ENCODE measurements at regions of chr15 and their contacts with region 1.

Region 1: GRCh38 chr15:89184357-89184756 is 37.0 kb downstream of the RLBP1 start:
- DNase-seq: no peak
- H3K4me3 ChIP-seq: no peak overlapping the region
- H3K27ac ChIP-seq: no peak overlapping the region
- H3K27me3 ChIP-seq: no peaks in the 10 kb centered on the region
- CTCF ChIP-seq: no peak

Region 2: DNA sequence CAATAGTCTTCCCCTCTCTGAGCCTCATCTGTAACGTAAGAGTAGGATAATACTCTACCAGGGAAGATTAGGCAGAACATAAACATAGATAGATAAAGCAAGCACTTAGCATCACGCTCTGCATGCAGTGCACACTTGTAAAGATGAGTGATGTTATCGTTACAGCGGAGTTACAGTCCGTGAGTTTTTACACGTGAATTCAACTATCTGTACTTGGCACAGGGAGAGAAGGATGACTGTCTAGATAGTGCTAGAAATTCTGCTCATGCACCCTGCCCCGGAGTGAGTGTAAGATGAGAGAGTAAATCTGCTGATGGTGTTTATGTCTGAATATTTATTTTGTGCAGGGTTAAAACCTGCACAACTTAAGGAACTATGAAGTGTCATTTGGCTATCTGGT is 324.8 kb before region 1 on chr15:
- CTCF ChIA-PET with region 1: no interaction called
- POLR2A ChIA-PET with region 1: no interaction called
- DNase-seq: no peak
- H3K4me3 ChIP-seq: no peak overlapping the region
- H3K27ac ChIP-seq: no peak overlapping the region
- H3K27me3 ChIP-seq: peaks cover 28% of the 10 kb centered on the region
- CTCF ChIP-seq: no peak

Region 3: GRCh38 chr15:89197503-89197971 is 13.2 kb after region 1 on chr15:
- CTCF ChIA-PET with region 1: interaction called, 12 read pairs
- POLR2A ChIA-PET with region 1: interaction called, 3 read pairs
- DNase-seq: no peak
- H3K4me3 ChIP-seq: no peak overlapping the region
- H3K27ac ChIP-seq: no peak overlapping the region
- H3K27me3 ChIP-seq: no peaks in the 10 kb centered on the region
- CTCF ChIP-seq: no peak

Region 4: GRCh38 chr15:89485855-89486361 is 301.6 kb after region 1 on chr15:
- CTCF ChIA-PET with region 1: no interaction called
- POLR2A ChIA-PET with region 1: no interaction called
- DNase-seq: no peak
- H3K4me3 ChIP-seq: no peak overlapping the region
- H3K27ac ChIP-seq: no peak overlapping the region
- H3K27me3 ChIP-seq: peaks cover 38% of the 10 kb centered on the region
- CTCF ChIP-seq: no peak